Activated T-helper 1 cell treated with anti-CD3 and anti-CD28 coated beads, Interleukin-12 subunit alpha, Interleukin-12 subunit beta, Interleukin-2, Interleukin-4 antibody, amounts not matched to agents 30 ng/mL and 10 ng/mL and 1 ng/mL, durations not matched to agents 14 hours and 24 hours and 36 hours (primary cell): ENCODE measurements at regions of chr17 and their contacts with region 1.

Region 1: DNA sequence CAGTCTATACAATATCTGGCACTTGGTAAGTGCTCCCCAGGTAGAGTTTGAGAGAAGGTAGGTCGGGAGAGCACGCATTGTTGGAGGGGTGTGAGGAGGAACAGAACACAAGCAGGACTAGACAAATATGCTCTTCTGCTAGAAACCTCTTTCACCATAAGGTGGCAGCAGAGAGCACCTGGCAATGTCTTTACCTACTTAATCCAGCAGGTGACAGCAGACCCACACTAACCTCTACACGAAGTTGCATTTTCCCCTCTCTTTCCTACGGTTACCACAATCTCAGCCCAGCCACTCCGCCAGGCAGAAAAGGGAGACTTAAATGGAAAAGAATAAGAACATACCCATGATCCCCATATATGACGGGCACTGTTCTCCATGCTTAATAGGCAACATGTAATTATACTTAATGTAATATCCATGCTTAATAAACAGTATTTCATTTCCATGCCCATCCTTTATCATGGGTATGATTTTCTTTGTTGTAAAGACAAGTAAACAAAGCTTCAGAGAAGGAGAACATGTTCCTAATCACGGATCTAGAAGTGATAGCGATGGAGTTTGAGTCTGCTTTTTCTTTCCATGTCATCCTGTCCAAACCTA is 55.1 kb upstream of the CCL2 start:
- DNase-seq: peak; percentile 61
- H3K4me3 Mint-ChIP-seq: no peak overlapping the region
- H3K27ac Mint-ChIP-seq: no peak overlapping the region
- H3K4me1 Mint-ChIP-seq: peaks cover 18% of the 10 kb centered on the region
- H3K27me3 Mint-ChIP-seq: peaks cover 21% of the 10 kb centered on the region

Region 2: GRCh38 chr17:34306466-34306865 is 106.4 kb after region 1 on chr17:
- intact Hi-C with region 1: loop called (anchors 1 kb)
- DNase-seq: no peak
- H3K4me3 Mint-ChIP-seq: no peak overlapping the region
- H3K27ac Mint-ChIP-seq: no peak overlapping the region
- H3K4me1 Mint-ChIP-seq: peaks cover 57% of the 10 kb centered on the region
- H3K27me3 Mint-ChIP-seq: peaks cover 7% of the 10 kb centered on the region

Region 3: GRCh38 chr17:34378664-34379101 is 178.7 kb after region 1 on chr17:
- intact Hi-C with region 1: loop called (anchors 1 kb)
- DNase-seq: peak; percentile 32
- H3K4me3 Mint-ChIP-seq: peak overlapping the region; percentile 62
- H3K27ac Mint-ChIP-seq: peak overlapping the region; percentile 77
- H3K4me1 Mint-ChIP-seq: peaks cover 75% of the 10 kb centered on the region
- H3K27me3 Mint-ChIP-seq: peaks cover 12% of the 10 kb centered on the region

Region 4: GRCh38 chr17:34436607-34437006 is 236.6 kb after region 1 on chr17:
- intact Hi-C with region 1: loop called (anchors 1 kb)
- DNase-seq: no peak
- H3K4me3 Mint-ChIP-seq: no peak overlapping the region
- H3K27ac Mint-ChIP-seq: no peak overlapping the region
- H3K4me1 Mint-ChIP-seq: no peaks in the 10 kb centered on the region
- H3K27me3 Mint-ChIP-seq: peaks cover 5% of the 10 kb centered on the region

Region 5: GRCh38 chr17:34637548-34638525 is 437.8 kb after region 1 on chr17:
- intact Hi-C with region 1: loop called (anchors 1 kb)
- DNase-seq: peak; percentile 66
- H3K4me3 Mint-ChIP-seq: no peak overlapping the region
- H3K27ac Mint-ChIP-seq: no peak overlapping the region
- H3K4me1 Mint-ChIP-seq: no peaks in the 10 kb centered on the region
- H3K27me3 Mint-ChIP-seq: peaks cover 29% of the 10 kb centered on the region